Activated T-helper 1 cell treated with anti-CD3 and anti-CD28 coated beads, Interleukin-12 subunit alpha, Interleukin-12 subunit beta, Interleukin-2, Interleukin-4 antibody, amounts not matched to agents 30 ng/mL and 10 ng/mL and 1 ng/mL, durations not matched to agents 14 hours and 24 hours and 36 hours (primary cell): ENCODE measurements at regions of chr1 and their contacts with region 1.

Region 1: GRCh38 chr1:169546087-169546995 is 39.9 kb downstream of the F5 start:
- DNase-seq: peak; percentile 40
- H3K4me3 Mint-ChIP-seq: no peak overlapping the region
- H3K27ac Mint-ChIP-seq: no peak overlapping the region
- H3K4me1 Mint-ChIP-seq: peaks cover 9% of the 10 kb centered on the region
- H3K27me3 Mint-ChIP-seq: no peaks in the 10 kb centered on the region

Region 2: DNA sequence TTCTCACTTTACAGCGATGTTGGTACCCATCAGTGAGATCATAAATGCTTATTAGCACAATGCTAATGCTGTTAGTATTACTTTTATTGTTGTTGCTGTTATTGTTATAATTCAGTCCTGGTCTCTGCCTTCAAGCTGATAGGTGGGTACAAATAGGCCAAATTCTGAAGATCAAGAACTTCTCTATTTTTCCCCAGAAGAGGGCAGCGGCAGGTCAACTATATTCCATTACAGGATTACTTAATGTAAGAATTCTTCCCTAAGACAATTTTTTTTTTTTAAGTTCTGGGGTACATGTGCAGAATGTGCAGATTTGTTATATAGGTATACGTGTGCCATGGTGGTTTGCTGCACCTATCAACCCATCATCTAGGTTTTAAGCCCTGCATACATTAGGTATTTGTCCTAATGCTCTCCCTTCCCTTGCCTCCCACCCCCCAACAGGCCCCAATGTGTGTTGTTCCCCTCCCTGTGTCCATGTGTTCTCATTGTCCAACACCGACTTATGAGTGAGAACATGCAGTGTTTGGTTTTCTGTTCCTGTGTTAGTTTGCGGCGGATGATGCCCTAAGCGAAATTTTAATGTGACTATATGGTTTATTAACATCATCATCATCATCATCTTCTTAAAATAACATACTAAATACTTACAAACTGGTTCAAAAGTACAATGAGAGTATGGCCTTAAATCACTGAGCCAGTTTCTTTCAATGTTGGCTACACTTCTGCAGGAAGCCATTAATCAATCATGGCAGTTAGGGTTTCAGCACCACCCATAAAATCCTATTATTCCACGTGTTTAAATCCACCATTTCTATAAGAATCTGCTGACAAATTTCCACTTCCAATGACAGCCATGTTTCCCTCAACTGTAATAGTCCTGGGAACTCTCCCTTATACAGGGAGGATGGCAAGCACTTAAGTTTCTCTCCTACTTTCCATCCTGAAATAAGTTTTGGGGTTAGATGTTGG is 79.8 kb before region 1 on chr1:
- intact Hi-C with region 1: loop called (anchors 1 kb)
- DNase-seq: no peak
- H3K4me3 Mint-ChIP-seq: no peak overlapping the region
- H3K27ac Mint-ChIP-seq: no peak overlapping the region
- H3K4me1 Mint-ChIP-seq: peaks cover 1% of the 10 kb centered on the region
- H3K27me3 Mint-ChIP-seq: no peaks in the 10 kb centered on the region

Region 3: GRCh38 chr1:169517586-169518192 is 28.7 kb before region 1 on chr1:
- intact Hi-C with region 1: no loop called
- DNase-seq: no peak
- H3K4me3 Mint-ChIP-seq: no peak overlapping the region
- H3K27ac Mint-ChIP-seq: no peak overlapping the region
- H3K4me1 Mint-ChIP-seq: peaks cover 6% of the 10 kb centered on the region
- H3K27me3 Mint-ChIP-seq: no peaks in the 10 kb centered on the region

Region 4: GRCh38 chr1:169809370-169810095 is 263.2 kb after region 1 on chr1:
- intact Hi-C with region 1: loop called (anchors 1 kb)
- DNase-seq: no peak
- H3K4me3 Mint-ChIP-seq: no peak overlapping the region
- H3K27ac Mint-ChIP-seq: no peak overlapping the region
- H3K4me1 Mint-ChIP-seq: peaks cover 10% of the 10 kb centered on the region
- H3K27me3 Mint-ChIP-seq: no peaks in the 10 kb centered on the region

Region 5: DNA sequence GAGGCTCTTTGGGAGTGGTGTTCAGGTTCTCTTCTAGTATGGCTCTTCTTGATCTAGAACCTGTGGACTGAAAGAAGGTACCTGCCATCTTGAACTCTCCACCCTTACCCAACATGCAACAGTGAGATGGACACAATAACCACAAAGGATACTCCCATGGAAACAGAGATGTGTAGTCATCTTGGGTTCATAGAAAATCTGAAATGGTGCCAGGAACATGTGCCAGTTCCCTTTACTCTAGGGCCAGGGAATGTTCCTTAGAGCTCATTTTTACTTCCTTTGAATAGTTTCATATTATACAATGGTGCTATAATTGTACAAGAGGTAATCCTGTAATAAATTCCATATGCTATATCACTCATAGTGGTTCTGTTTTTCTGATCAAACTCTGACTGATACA is 360.6 kb after region 1 on chr1:
- intact Hi-C with region 1: no loop called
- DNase-seq: no peak
- H3K4me3 Mint-ChIP-seq: no peak overlapping the region
- H3K27ac Mint-ChIP-seq: no peak overlapping the region
- H3K4me1 Mint-ChIP-seq: peaks cover 35% of the 10 kb centered on the region
- H3K27me3 Mint-ChIP-seq: peaks cover 6% of the 10 kb centered on the region